ENCODE measurements at regions of chr6 and their contacts with region 1.

Region 1: DNA sequence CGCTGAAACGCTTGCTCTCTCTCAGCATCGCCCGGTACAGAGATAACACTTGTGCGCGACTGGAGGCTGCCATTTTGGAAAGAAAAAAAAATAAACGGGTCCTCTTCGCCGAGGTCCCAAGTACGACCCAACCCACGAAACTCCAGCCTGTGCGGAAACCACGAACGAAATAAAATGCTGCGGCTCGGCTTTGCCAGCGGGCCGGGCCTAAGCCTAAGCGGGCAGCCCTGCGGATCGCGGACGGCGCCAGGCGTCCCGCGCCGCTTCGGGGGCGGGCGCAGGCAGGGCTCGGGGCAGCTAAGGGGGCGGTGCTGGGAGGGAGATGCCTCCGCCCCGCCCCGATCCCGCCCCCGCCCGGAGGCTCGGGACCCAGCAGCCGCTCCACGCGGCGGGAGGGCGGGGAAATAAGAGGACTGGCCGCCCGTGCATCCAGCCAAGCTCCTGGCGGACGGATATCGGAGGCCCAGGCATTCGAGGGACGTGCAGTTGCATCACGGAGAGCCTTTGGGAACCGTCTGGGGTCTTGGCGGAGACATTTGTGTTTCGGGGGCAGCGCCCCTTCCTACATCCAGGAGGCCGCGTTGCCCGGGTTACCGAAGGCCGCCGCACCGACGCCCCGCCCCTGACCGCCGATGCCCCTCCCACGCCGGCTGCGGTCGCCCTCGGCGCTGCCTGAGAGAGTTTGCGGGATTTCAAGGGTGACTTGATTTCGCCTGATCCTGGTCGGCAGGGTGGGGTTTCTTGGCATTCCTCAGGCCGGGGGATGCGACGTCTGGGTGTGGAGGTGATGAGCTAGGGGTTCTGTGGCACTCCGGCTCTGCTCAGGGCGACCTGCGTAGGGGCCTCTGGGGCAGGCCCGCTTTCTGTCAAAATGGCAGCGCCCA is at the starts of genes FARS2 and LYRM4:
- DNase-seq: peak; percentile 84 to 94 (median 91)
- H3K4me3 ChIP-seq: peak within 1 kb of the TSS; percentile 89
- H3K27ac ChIP-seq: peak within 1 kb of the TSS; percentile 84 to 96
- H3K4me1 ChIP-seq: peaks cover 5% of the 10 kb centered on the region
- H3K27me3 ChIP-seq: no peaks in the 10 kb centered on the region
- CTCF ChIP-seq: peak in 2 of 3 donors; percentile 22 to 23
- EP300 ChIP-seq: no peak
- POLR2A ChIP-seq: no peak
- total RNA-seq, gene FARS2: 10.5 to 17.5 (median 12.2) TPM
- total RNA-seq, gene LYRM4: 30.8 to 37.9 (median 33.6) TPM

Region 2: DNA sequence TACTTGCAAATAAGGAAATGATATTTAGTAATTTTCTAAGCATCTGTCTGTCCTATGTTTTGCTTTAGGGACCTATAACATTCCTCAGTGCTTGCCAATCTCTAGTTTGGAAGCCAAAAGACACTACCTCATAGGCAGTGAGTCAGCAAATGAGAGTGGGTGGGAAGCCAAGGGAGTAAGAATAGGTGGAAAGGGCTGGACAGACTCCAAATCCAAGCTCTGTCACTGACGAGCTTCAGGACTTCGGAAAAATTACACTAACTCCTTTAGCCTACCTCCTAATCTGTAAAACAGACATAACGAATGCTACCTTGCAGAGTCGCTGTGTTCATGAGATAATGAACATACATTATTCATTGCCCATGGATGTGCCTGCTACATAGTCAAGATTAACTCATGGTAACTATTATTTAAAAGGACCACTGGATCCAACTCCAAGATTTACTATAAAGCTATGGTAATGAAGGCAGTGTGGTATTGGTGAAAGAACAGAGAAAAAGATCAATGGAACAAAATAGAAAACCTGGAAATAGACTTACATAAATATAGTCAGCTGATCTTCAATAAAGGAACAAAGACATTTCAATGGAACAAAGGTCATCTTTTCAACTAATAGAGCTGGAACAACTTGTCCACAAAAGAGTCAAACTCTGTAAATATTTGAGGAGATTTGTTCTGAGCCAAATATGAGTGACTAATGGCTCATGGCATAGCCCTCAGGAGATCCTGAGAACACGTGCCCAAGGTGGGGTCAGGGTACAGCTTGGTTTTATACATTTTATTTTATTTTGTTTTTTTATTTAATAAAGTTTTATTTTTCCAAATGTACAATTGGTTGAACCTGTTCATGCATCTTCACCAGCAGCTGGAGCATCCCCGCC is 1347.6 kb before region 1 on chr6:
- intact Hi-C with region 1: no loop called
- DNase-seq: peak in 3 of 5 donors; percentile 49 to 61 (median 60)
- H3K4me3 ChIP-seq: no peak overlapping the region
- H3K27ac ChIP-seq: no peak overlapping the region
- H3K4me1 ChIP-seq: peaks cover 3% of the 10 kb centered on the region
- H3K27me3 ChIP-seq: no peaks in the 10 kb centered on the region
- CTCF ChIP-seq: no peak
- EP300 ChIP-seq: no peak
- POLR2A ChIP-seq: no peak

Region 3: GRCh38 chr6:5205877-5206850 is 54.7 kb before region 1 on chr6:
- intact Hi-C with region 1: loop called in 2 of 4 experiments (anchors 10 kb)
- DNase-seq: peak; percentile 75 to 87 (median 79)
- H3K4me3 ChIP-seq: no peak overlapping the region
- H3K27ac ChIP-seq: peak overlapping the region in 1 of 2 donors; percentile 73
- H3K4me1 ChIP-seq: peaks cover 13% of the 10 kb centered on the region
- H3K27me3 ChIP-seq: no peaks in the 10 kb centered on the region
- CTCF ChIP-seq: no peak
- EP300 ChIP-seq: no peak
- POLR2A ChIP-seq: no peak

Region 4: DNA sequence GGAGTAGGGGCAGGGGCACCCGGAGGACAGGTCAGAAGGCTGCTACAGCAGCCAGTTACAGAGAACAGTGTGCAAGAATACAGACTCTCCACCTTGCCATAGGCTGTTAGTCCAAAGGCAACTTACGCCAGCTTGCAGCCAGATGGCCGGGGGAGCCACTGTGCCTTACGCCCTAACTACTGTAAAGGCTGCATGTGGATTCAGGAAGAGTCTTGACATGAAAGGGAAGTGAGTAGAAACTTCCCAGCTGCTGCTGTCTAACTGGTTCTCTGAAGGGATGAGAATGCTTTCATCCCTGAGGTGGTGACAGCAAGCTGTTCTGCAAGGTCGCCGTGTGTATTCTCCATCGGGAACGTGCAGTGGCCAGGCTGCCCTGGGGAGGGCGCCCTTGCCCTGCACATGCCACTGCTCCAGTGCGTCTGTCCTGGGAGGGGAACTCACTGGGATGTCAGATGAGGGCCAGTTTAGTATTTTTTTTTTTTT is 46.3 kb before region 1 on chr6:
- intact Hi-C with region 1: loop called in 2 of 4 experiments (anchors 10 kb)
- DNase-seq: peak in 1 of 5 donors; percentile 58
- H3K4me3 ChIP-seq: no peak overlapping the region
- H3K27ac ChIP-seq: no peak overlapping the region
- H3K4me1 ChIP-seq: no peaks in the 10 kb centered on the region
- H3K27me3 ChIP-seq: no peaks in the 10 kb centered on the region
- CTCF ChIP-seq: no peak
- EP300 ChIP-seq: no peak
- POLR2A ChIP-seq: no peak

Region 5: GRCh38 chr6:5294392-5295211 is 33.7 kb after region 1 on chr6:
- intact Hi-C with region 1: no loop called
- DNase-seq: no peak
- H3K4me3 ChIP-seq: no peak overlapping the region
- H3K27ac ChIP-seq: no peak overlapping the region
- H3K4me1 ChIP-seq: no peaks in the 10 kb centered on the region
- H3K27me3 ChIP-seq: no peaks in the 10 kb centered on the region
- CTCF ChIP-seq: no peak
- EP300 ChIP-seq: no peak
- POLR2A ChIP-seq: no peak

Region 6: GRCh38 chr6:5361396-5361795 is 100.5 kb after region 1 on chr6:
- intact Hi-C with region 1: no loop called
- DNase-seq: no peak
- H3K4me3 ChIP-seq: no peak overlapping the region
- H3K27ac ChIP-seq: no peak overlapping the region
- H3K4me1 ChIP-seq: no peaks in the 10 kb centered on the region
- H3K27me3 ChIP-seq: peaks cover 2% of the 10 kb centered on the region
- CTCF ChIP-seq: no peak
- EP300 ChIP-seq: no peak
- POLR2A ChIP-seq: no peak